CD14-positive monocyte (primary cell): ENCODE measurements at regions of chr2 and their contacts with region 1.

Region 1: DNA sequence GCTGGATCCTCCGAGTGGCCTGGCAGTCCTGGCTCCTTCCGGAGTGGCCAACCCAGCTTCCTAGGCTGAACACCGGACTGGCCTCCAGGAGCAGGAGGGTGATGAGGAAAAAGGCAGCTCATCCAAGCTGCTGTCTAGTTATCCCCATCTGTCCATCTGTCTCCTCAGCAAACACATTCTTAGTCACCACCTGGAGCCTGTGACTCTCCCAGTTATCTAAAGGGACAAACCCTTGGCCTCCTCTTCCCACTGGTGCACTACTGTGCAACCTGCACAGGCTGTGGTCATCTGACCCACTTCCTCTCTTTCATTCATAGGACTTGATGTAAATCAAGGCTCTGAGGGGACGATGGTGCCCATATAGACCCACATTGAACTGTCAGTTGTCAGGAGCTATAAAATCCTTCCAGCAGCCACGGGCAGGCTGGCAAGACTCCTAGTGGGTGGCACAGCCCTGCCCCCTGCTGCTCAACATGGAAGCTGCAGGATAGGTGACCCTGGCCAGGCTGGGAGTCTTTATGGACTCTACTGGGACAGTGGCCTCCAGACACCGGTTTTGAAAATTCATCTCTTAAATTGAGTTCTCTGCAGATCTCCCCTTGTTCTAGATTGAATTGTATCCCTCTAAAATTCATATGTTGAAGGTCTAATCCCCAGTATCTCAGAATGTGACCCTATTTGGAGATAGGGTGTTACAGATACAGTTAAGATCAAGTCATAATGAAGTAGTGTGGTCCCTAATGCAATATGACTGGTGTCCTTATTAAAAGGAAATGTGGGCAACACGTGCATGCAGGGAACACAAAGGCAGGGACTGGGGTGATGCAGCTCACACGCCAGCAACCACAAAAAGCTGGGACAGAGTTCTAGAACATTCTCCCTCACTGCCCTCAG is 29.3 kb upstream of the DUSP2 start:
- DNase-seq: peak; percentile 67 to 81 (median 79)
- H3K4me3 ChIP-seq: no peak overlapping the region
- H3K4me3 Mint-ChIP-seq: no peak overlapping the region
- H3K27ac ChIP-seq: no peak overlapping the region
- H3K27ac Mint-ChIP-seq: peak overlapping the region in 2 of 7 donors; percentile 7 to 88
- H3K4me1 ChIP-seq: no peaks in the 10 kb centered on the region
- H3K4me1 Mint-ChIP-seq: peaks cover 2% of the 10 kb centered on the region
- H3K27me3 ChIP-seq: no peaks in the 10 kb centered on the region
- H3K27me3 Mint-ChIP-seq: peaks cover 0 to 6% (median 4%) of the 10 kb centered on the region in 3 donors
- CTCF ChIP-seq: peak; percentile 94

Region 2: DNA sequence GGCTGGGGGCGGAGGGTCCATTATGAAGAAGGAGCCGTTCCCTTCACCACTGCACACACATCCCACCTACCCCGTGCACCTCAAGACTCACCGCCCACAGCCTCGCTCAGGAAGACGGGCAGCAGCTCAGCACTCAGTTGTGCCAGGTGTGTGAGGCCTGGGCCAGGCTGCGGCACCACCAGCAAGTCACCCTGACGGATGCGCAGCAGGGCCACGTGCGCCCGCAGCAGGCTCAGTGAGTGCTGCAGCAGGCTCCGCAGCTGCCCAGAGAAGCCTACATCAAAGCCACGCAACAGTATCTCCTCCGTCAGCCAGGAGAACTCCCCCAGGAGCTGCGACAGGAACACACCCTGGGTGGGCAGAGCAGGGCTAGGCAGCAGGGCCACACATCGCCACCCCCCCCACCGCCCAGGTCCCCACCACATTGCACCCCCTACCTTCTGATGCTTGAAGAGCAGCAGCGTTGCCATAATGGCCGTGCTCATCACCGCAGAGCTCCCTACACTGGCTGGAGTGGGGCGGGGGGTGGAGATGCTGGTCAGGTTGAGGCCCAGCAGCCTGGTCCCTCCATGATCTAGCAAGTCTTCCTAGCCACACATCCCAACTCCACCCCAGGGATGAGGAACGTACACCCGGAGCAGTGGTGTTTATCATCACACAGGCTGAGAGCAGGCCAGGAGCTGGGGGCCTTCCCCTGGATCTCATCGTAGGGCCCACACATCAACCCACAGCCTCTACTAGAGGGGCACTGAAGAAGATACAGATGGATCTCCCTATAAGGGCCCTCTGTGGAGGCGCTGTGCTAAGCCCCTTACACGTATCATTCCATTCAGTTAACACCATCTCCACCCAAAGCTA is 149.9 kb before region 1 on chr2:
- intact Hi-C with region 1: loop called in 1 of 2 experiments (anchors 10 kb)
- DNase-seq: no peak
- H3K4me3 ChIP-seq: no peak overlapping the region
- H3K4me3 Mint-ChIP-seq: no peak overlapping the region
- H3K27ac ChIP-seq: no peak overlapping the region
- H3K27ac Mint-ChIP-seq: no peak overlapping the region
- H3K4me1 ChIP-seq: no peaks in the 10 kb centered on the region
- H3K4me1 Mint-ChIP-seq: peaks cover 2% of the 10 kb centered on the region
- H3K27me3 ChIP-seq: no peaks in the 10 kb centered on the region
- H3K27me3 Mint-ChIP-seq: peaks cover 0 to 1% (median 0%) of the 10 kb centered on the region in 3 donors
- CTCF ChIP-seq: no peak

Region 3: GRCh38 chr2:96116879-96117697 is 57.4 kb before region 1 on chr2:
- intact Hi-C with region 1: loop called in 1 of 2 experiments (anchors 10 kb)
- DNase-seq: peak; percentile 23 to 59 (median 54)
- H3K4me3 ChIP-seq: peak overlapping the region in 2 of 3 experiments; percentile 27 to 71
- H3K4me3 Mint-ChIP-seq: peak overlapping the region in 1 of 2 donors; percentile 73
- H3K27ac ChIP-seq: no peak overlapping the region
- H3K27ac Mint-ChIP-seq: no peak overlapping the region
- H3K4me1 ChIP-seq: peaks cover 3 to 18% of the 10 kb centered on the region in 2 donors
- H3K4me1 Mint-ChIP-seq: peaks cover 19% of the 10 kb centered on the region
- H3K27me3 ChIP-seq: peaks cover 5 to 45% of the 10 kb centered on the region in 2 donors
- H3K27me3 Mint-ChIP-seq: peaks cover 37 to 70% (median 40%) of the 10 kb centered on the region in 3 donors
- CTCF ChIP-seq: peak; percentile 95

Region 4: GRCh38 chr2:96138179-96139145 is 36.0 kb before region 1 on chr2 and contains the start of gene ASTL:
- intact Hi-C with region 1: loop called (anchors 1 to 2 kb)
- DNase-seq: peak; percentile 37 to 56 (median 54)
- H3K4me3 ChIP-seq: no peak within 1 kb of the TSS
- H3K4me3 Mint-ChIP-seq: no peak within 1 kb of the TSS
- H3K27ac ChIP-seq: no peak within 1 kb of the TSS
- H3K27ac Mint-ChIP-seq: peak within 1 kb of the TSS in 1 of 7 donors; percentile 6
- H3K4me1 ChIP-seq: peaks cover 0 to 4% of the 10 kb centered on the region in 2 donors
- H3K4me1 Mint-ChIP-seq: peaks cover 13% of the 10 kb centered on the region
- H3K27me3 ChIP-seq: no peaks in the 10 kb centered on the region
- H3K27me3 Mint-ChIP-seq: peaks cover 0 to 4% (median 3%) of the 10 kb centered on the region in 3 donors
- CTCF ChIP-seq: peak; percentile 52
- polyA plus RNA-seq, gene ASTL: 0.71 TPM in 1 of 3 donors, not detected in the others

Region 5: GRCh38 chr2:96148410-96149217 is 25.9 kb before region 1 on chr2:
- intact Hi-C with region 1: no loop called
- DNase-seq: peak; percentile 97 to 100 (median 98)
- H3K4me3 ChIP-seq: peak overlapping the region in 1 of 3 experiments; percentile 41
- H3K4me3 Mint-ChIP-seq: peak overlapping the region; percentile 70 to 81
- H3K27ac ChIP-seq: peak overlapping the region; percentile 6 to 48
- H3K27ac Mint-ChIP-seq: peak overlapping the region; percentile 84 to 99 (median 97)
- H3K4me1 ChIP-seq: peaks cover 49 to 54% of the 10 kb centered on the region in 2 donors
- H3K4me1 Mint-ChIP-seq: peaks cover 61% of the 10 kb centered on the region
- H3K27me3 ChIP-seq: no peaks in the 10 kb centered on the region
- H3K27me3 Mint-ChIP-seq: peaks cover 3 to 13% (median 3%) of the 10 kb centered on the region in 3 donors
- CTCF ChIP-seq: no peak

Region 6: DNA sequence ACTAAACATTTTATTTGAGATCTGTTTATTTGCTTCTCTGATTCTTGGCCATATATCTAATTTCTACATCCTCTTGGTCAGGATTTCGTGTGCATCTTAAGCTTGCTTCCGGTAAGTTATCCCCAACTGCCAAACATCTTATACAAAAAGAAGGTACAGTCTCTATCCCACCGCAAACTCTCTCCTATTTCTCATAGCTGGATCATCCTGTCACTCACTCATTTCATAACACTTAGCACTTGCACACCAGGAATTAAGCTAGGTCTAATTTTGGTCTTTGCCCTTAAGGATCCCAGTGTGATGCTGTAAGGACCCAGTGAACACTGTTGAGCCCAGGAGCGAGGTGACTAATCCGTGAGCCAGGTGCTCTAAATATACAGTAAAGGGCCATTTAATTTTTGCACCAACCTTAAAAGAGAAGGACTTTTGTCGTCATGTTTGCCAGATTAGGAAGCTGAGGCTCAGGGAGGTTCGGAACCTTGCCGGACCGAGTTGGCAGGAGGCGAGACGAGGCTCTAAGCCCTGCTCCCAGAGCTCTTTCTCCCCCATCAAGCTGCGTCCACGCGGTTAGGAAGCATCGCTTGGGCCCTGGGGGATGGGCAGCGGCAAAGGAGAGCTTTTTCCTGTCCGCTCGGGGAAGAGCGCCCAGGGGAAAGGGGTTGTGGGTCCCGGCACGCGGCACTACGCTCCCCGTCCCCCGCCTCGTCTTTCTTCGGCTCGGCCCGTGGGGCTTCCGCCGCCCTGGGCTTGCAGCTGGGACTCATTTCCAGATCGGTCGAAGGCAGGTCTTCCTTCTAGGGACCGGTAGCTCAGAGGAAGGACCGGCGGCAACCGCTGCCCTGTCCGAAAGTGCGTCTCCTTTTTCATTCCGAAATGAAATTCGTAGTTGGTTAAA is 146.5 kb after region 1 on chr2:
- intact Hi-C with region 1: no loop called
- DNase-seq: no peak
- H3K4me3 ChIP-seq: peak overlapping the region; percentile 58 to 90 (median 71)
- H3K4me3 Mint-ChIP-seq: peak overlapping the region; percentile 97 to 98
- H3K27ac ChIP-seq: peak overlapping the region in 1 of 2 donors; percentile 11
- H3K27ac Mint-ChIP-seq: peak overlapping the region; percentile 14 to 80 (median 60)
- H3K4me1 ChIP-seq: peaks cover 41 to 50% of the 10 kb centered on the region in 2 donors
- H3K4me1 Mint-ChIP-seq: peaks cover 50% of the 10 kb centered on the region
- H3K27me3 ChIP-seq: peaks cover 0 to 5% of the 10 kb centered on the region in 2 donors
- H3K27me3 Mint-ChIP-seq: peaks cover 26 to 33% (median 32%) of the 10 kb centered on the region in 3 donors
- CTCF ChIP-seq: no peak